Calu3 (cell line): ENCODE measurements at regions of chr18 and their contacts with region 1.

Region 1: GRCh38 chr18:31977270-31977872 is 34.4 kb upstream of the TRAPPC8 start:
- DNase-seq: peak; percentile 43
- H3K4me3 Mint-ChIP-seq: no peak overlapping the region
- H3K27ac Mint-ChIP-seq: no peak overlapping the region
- H3K4me1 Mint-ChIP-seq: no peaks in the 10 kb centered on the region
- H3K27me3 Mint-ChIP-seq: no peaks in the 10 kb centered on the region
- CTCF ChIP-seq: peak; percentile 65

Region 2: DNA sequence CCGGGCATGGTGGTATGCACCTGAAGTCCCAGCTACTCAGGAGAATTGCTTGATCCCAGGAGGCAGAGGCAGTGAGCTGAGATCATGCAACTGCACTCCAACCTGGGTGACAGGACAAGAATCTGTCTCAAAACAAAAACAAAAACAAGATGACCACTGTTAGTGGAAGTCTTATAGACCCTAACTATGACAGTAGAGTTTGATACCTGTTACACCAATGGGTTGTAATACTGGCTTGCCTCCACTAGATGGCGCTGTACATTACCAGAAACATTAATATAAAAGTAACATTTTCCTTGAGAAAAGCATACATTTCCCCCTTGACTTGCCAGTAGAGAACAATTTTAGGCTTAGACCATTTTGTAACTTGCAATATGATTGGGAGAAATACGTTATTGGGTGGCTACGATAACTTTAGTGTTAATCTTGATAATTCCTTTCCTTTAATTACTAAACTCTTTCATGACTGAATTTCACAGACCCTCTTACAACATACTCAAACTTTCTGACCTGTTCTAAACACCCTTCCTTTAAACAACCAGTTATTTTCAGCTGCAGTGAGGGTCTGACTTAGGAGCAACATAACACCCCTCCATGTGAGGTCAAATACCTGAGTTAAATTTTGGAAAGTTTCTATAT is 236.2 kb before region 1 on chr18:
- CTCF ChIA-PET with region 1: no interaction called
- intact Hi-C with region 1: loop called (anchors 1 kb)
- DNase-seq: peak; percentile 41
- H3K4me3 Mint-ChIP-seq: no peak overlapping the region
- H3K27ac Mint-ChIP-seq: no peak overlapping the region
- H3K4me1 Mint-ChIP-seq: no peaks in the 10 kb centered on the region
- H3K27me3 Mint-ChIP-seq: peaks cover under 1% of the 10 kb centered on the region
- CTCF ChIP-seq: peak; percentile 89